ENCODE measurements at regions of chr12 and their contacts with region 1.

Region 1: DNA sequence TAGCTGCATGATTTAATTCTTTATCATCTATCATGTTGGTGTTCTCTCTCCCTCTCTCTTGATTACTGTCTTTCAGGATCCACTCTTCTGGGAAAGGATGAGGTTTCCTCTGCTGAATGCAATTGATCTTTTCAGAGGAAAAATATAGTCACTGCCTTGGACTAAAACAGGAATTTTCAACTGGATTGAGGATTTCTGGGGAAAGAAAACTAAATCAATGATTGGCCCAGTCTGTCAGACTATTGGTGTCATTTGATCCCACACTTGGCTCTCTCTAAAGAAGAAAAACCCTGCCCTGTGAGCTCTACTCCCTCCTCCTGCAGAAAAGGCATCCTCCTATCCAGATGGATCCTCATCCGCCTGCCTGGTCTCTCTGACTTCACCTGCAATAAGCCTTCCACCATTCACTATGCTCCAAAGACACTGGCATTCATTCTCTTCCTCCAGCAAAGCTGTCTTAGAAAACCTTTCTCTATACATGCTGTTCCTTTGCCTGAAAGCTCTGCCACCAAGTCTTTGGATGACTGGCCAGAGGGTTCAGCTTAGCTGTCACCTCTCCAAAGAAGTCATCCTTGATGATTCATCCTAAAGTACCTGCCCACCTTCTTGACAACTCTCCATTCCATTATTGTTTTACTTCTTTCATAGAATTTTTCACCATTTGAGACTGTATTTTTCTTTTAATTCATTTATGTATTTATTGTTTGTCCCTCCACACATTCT is 127.7 kb upstream of the CAND1 start:
- DNase-seq: no peak
- H3K4me3 ChIP-seq: no peak overlapping the region
- H3K27ac ChIP-seq: no peak overlapping the region
- H3K4me1 ChIP-seq: no peaks in the 10 kb centered on the region
- H3K27me3 ChIP-seq: no peaks in the 10 kb centered on the region
- CTCF ChIP-seq: no peak

Region 2: DNA sequence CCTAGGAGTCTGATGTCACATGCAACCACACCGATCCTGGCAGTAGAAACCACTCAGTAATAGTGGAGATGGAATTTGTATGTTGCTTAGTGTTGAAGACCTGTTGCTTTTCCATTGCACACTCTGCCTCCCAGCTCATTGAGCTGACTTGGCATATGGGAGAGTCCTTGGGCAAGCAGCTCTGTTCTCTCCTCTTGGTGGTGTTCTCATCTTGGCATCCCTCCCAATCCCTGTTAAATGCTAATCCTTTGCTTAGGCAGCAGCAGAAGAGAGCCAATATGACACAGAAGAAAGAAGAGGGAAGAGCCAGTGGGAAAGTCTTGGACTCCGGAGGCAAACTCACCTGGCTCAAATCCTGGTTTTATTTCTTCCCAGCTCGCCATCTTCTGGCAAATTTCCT is 50.3 kb before region 1 on chr12:
- intact Hi-C with region 1: no loop called
- DNase-seq: no peak
- H3K4me3 ChIP-seq: no peak overlapping the region
- H3K27ac ChIP-seq: no peak overlapping the region
- H3K4me1 ChIP-seq: no peaks in the 10 kb centered on the region
- H3K27me3 ChIP-seq: no peaks in the 10 kb centered on the region
- CTCF ChIP-seq: no peak

Region 3: GRCh38 chr12:67315661-67316060 is 174.2 kb after region 1 on chr12:
- intact Hi-C with region 1: loop called (anchors 5 kb)
- DNase-seq: no peak
- H3K4me3 ChIP-seq: no peak overlapping the region
- H3K27ac ChIP-seq: no peak overlapping the region
- H3K4me1 ChIP-seq: no peaks in the 10 kb centered on the region
- H3K27me3 ChIP-seq: no peaks in the 10 kb centered on the region
- CTCF ChIP-seq: no peak

Measured in tibial artery (tissue), 4 donors.